ENCODE measurements at regions of chr18 and their contacts with region 1.

Region 1: GRCh38 chr18:22098563-22098989 is 70.8 kb upstream of the GATA6 start:
- DNase-seq: no peak
- H3K4me3 ChIP-seq: no peak overlapping the region
- H3K27ac ChIP-seq: no peak overlapping the region
- H3K4me1 ChIP-seq: peaks cover 0 to 14% (median 10%) of the 10 kb centered on the region in 4 donors
- H3K27me3 ChIP-seq: no peaks in the 10 kb centered on the region
- CTCF ChIP-seq: no peak
- EP300 ChIP-seq: no peak
- POLR2A ChIP-seq: no peak

Region 2: GRCh38 chr18:21769206-21769605 is 329.4 kb before region 1 on chr18:
- in situ Hi-C with region 1: no loop called
- intact Hi-C with region 1: no loop called
- DNase-seq: no peak
- H3K4me3 ChIP-seq: no peak overlapping the region
- H3K27ac ChIP-seq: no peak overlapping the region
- H3K4me1 ChIP-seq: peaks cover 0 to under 1% (median 0%) of the 10 kb centered on the region in 4 donors
- H3K27me3 ChIP-seq: no peaks in the 10 kb centered on the region
- CTCF ChIP-seq: no peak
- EP300 ChIP-seq: no peak
- POLR2A ChIP-seq: no peak

Region 3: DNA sequence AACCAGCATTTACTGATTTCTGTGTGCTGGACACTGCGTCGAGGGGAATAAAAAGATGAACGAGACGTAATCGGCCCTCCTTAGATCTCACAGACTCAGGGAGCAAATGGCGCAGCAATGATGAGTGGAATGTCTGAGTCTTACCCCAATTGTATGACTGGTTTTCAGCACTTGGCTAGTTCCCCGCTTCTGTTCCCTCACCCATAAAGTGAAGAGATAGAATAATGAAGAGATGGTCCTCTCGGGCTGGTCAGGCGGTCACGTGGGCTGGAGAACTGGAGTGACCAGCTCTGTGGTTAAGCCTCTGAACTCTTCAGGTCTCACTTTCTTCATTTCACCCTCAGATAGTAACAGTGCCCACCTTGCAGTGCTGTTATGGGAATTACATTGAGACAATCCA is 53.6 kb after region 1 on chr18:
- in situ Hi-C with region 1: loop called in 1 of 4 experiments (anchors 10 kb)
- intact Hi-C with region 1: no loop called
- DNase-seq: no peak
- H3K4me3 ChIP-seq: no peak overlapping the region
- H3K27ac ChIP-seq: no peak overlapping the region
- H3K4me1 ChIP-seq: no peaks in the 10 kb centered on the region
- H3K27me3 ChIP-seq: peaks cover 4% of the 10 kb centered on the region
- CTCF ChIP-seq: no peak
- EP300 ChIP-seq: no peak
- POLR2A ChIP-seq: no peak